ENCODE measurements at regions of chr12 and their contacts with region 1.

Region 1: DNA sequence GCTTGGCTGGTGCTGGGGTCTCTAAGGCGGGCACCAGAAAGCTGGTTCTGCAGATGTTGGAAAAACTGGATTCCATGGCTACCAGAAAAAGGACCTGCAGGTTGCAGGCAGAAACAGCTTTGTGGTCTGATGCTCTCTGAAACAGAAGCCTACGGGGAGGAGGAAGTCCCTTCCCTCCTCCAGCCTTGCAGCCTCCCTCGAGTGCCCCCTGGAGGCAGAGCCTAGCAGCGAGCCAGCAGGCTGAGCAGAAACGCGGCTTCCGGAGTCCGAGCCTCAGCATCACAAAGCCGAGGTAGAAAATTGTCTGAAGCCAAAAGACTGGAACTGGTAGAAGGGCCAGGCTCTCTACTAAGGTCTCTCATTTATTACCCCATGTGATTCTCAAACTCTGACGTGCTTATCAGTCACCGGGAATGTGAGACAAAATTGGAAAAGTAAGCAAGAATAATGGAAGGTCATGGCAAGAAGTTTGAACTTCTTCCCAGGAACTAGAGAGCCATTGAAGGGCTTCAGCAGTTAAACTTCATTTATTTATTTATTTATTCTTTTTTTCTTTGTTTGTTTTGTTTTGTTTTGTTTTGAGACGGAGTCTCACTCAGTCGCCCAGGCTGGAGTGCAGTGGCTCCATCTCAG is 82.2 kb upstream of the CPSF6 start:
- DNase-seq: peak; percentile 83
- ATAC-seq: peak; percentile 97
- H3K4me3 Mint-ChIP-seq: peak overlapping the region; percentile 17
- H3K27ac Mint-ChIP-seq: peak overlapping the region; percentile 24
- H3K4me1 Mint-ChIP-seq: peaks cover 14% of the 10 kb centered on the region
- H3K27me3 Mint-ChIP-seq: no peaks in the 10 kb centered on the region
- CTCF ChIP-seq: peak; percentile 85

Region 2: GRCh38 chr12:68831272-68831671 is 325.9 kb before region 1 on chr12:
- CTCF ChIA-PET with region 1: interaction called, 6 read pairs
- POLR2A ChIA-PET with region 1: no interaction called
- intact Hi-C with region 1: loop called (anchors 1 kb)
- DNase-seq: no peak
- ATAC-seq: no peak
- H3K4me3 Mint-ChIP-seq: no peak overlapping the region
- H3K27ac Mint-ChIP-seq: no peak overlapping the region
- H3K4me1 Mint-ChIP-seq: peaks cover 5% of the 10 kb centered on the region
- H3K27me3 Mint-ChIP-seq: no peaks in the 10 kb centered on the region
- CTCF ChIP-seq: no peak

Region 3: DNA sequence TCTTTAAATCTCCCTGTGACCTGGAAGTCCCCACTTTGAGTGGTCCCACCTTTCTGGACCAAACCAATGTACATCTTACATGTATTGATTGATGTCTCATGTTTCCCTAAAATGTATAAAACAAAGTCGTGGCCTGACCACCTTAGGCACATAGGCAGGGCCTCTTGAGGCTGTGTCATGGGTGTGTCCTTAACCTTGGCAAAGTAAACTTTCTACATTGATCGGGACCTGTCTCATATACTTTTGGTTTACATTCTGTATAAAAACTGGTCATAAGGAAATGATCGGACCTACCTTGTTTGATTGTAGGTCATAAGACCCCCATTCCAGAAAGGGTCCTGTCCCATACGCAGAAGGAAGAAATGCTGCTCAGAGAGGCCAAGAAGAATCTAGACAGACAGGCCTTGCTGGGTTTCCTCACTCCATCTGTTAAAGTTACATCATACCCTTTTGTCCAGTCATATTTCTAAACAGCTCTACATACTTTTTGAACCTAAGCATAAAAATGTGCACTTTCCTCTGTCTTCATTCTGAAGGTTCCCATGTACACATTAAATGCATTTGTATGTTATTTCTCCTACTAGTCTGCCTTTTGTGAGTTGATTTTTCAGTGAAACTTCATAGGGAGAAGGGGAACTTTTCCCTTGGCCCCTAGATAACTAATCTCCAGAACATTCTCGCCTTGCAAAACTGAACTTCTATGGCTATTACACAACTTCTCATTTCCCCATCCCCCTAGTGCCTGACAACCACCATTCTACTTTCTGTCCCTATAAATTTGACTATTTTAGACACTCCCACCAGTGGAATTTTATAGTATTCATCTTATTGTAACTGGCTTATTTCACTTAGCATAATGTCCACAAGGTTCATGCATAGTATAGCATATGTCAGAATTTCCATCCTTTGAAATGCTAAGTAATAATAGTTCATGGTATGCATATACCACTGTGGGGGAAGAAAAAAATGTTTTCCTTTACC is 194.0 kb before region 1 on chr12:
- CTCF ChIA-PET with region 1: no interaction called
- POLR2A ChIA-PET with region 1: no interaction called
- intact Hi-C with region 1: no loop called
- DNase-seq: no peak
- ATAC-seq: no peak
- H3K4me3 Mint-ChIP-seq: no peak overlapping the region
- H3K27ac Mint-ChIP-seq: no peak overlapping the region
- H3K4me1 Mint-ChIP-seq: peaks cover 18% of the 10 kb centered on the region
- H3K27me3 Mint-ChIP-seq: no peaks in the 10 kb centered on the region
- CTCF ChIP-seq: no peak

Region 4: GRCh38 chr12:69239352-69239921 is 82.3 kb after region 1 on chr12 and contains the start of gene CPSF6:
- CTCF ChIA-PET with region 1: interaction called, 10 read pairs
- POLR2A ChIA-PET with region 1: interaction called, 3 read pairs
- intact Hi-C with region 1: loop called (anchors 1 kb)
- DNase-seq: peak; percentile 96
- ATAC-seq: peak; percentile 93
- H3K4me3 Mint-ChIP-seq: peak within 1 kb of the TSS; percentile 99
- H3K27ac Mint-ChIP-seq: peak within 1 kb of the TSS; percentile 96
- H3K4me1 Mint-ChIP-seq: peaks cover 51% of the 10 kb centered on the region
- H3K27me3 Mint-ChIP-seq: no peaks in the 10 kb centered on the region
- CTCF ChIP-seq: no peak
- total RNA-seq, gene CPSF6: 95.5 and 104 TPM in 2 replicates

Region 5: DNA sequence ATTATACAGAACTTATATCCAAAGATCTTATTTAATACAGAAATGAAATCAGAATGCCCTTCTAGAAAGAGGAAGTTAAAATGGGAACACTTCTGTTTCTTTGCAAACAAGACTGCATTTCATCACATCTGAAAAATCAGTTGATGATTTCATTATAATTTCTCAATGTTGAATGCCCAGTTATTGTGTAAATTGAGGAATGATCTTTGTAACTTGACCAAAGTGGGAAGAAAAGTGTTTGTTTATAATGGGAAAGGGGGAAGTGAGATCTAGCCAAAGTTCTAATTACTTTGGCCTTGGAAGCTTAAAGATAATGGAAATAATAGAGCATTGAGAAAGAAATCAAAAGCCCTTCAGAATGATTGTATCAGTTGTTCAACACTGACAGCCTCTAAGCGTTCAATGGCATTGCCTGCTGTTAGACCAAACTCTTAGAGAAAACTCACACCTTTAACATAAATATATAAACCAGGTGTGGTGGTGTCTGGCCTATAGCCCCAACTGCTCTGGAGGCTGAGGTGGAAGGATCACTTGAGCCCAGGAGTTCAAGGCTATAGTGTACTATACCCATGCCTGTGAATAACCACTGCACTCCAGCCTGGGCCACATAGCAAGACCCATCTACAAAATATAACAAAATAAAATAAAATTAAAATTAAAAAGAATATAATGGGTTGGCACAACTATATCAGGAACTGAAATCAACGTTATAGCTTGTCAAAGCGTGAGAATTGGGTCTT is 181.2 kb after region 1 on chr12:
- CTCF ChIA-PET with region 1: no interaction called
- POLR2A ChIA-PET with region 1: no interaction called
- intact Hi-C with region 1: loop called (anchors 5 kb)
- DNase-seq: no peak
- ATAC-seq: peak; percentile 50
- H3K4me3 Mint-ChIP-seq: no peak overlapping the region
- H3K27ac Mint-ChIP-seq: peak overlapping the region; percentile 79
- H3K4me1 Mint-ChIP-seq: peaks cover 23% of the 10 kb centered on the region
- H3K27me3 Mint-ChIP-seq: peaks cover 2% of the 10 kb centered on the region
- CTCF ChIP-seq: no peak

Region 6: DNA sequence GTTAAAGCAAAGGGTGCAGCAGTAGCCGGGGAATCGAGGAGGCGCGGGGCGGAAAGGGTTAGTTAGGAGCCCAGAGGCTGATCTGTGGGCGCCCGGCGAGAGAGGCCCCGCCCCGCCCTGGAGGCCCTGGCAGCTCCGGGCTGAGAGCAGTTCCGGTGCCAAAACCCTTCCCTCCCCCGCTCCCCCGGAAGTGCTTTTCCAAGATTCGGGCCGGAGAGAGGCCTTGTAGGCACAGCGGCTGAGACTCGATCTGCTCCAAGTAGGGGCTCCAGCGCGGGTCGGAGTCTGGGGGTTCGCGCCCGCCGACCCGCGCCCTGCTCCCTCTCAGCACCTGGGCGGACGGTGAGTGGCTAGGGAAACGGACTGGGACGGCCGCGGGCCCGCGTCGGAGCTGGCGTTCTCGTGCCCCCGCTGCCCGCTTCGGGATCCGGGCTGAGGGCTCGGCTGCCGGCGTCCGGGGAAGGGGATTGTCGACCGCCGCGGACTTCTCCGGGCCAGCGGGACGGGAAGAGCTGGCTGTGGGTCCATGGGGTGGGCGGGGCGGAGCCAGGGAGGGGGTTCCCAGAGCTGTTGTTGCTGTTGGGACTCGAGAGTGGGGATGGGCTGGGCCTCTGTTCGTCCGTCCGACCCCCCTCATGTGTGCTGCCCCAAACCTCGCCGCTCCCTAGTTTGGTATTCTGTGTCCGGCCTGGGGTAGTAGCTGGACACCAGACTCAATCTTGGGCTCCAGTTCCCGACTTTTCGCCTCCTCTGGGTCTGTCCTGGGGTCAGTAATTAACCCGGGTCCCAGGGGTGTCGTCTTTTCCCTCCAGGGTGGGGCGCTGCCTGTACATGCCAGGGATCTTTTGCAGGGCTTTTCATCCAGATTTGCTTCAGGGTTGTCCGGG is 313.3 kb after region 1 on chr12 and contains the start of gene FRS2:
- CTCF ChIA-PET with region 1: no interaction called
- POLR2A ChIA-PET with region 1: no interaction called
- intact Hi-C with region 1: loop called (anchors 2 kb)
- DNase-seq: peak; percentile 77
- ATAC-seq: peak; percentile 98
- H3K4me3 Mint-ChIP-seq: peak within 1 kb of the TSS; percentile 99
- H3K27ac Mint-ChIP-seq: peak within 1 kb of the TSS; percentile 95
- H3K4me1 Mint-ChIP-seq: peaks cover 77% of the 10 kb centered on the region
- H3K27me3 Mint-ChIP-seq: no peaks in the 10 kb centered on the region
- CTCF ChIP-seq: no peak
- total RNA-seq, gene FRS2: 23.2 and 23.8 TPM in 2 replicates

Region 7: GRCh38 chr12:69585189-69586062 is 428.3 kb after region 1 on chr12 and contains the start of gene CCT2:
- CTCF ChIA-PET with region 1: interaction called, 7 read pairs
- POLR2A ChIA-PET with region 1: no interaction called
- intact Hi-C with region 1: loop called (anchors 1 kb)
- DNase-seq: peak; percentile 91
- ATAC-seq: peak; percentile 90
- H3K4me3 Mint-ChIP-seq: peak within 1 kb of the TSS; percentile 96
- H3K27ac Mint-ChIP-seq: peak within 1 kb of the TSS; percentile 95
- H3K4me1 Mint-ChIP-seq: peaks cover 8% of the 10 kb centered on the region
- H3K27me3 Mint-ChIP-seq: no peaks in the 10 kb centered on the region
- CTCF ChIP-seq: no peak
- total RNA-seq, gene CCT2: 205 and 211 TPM in 2 replicates

Region 8: DNA sequence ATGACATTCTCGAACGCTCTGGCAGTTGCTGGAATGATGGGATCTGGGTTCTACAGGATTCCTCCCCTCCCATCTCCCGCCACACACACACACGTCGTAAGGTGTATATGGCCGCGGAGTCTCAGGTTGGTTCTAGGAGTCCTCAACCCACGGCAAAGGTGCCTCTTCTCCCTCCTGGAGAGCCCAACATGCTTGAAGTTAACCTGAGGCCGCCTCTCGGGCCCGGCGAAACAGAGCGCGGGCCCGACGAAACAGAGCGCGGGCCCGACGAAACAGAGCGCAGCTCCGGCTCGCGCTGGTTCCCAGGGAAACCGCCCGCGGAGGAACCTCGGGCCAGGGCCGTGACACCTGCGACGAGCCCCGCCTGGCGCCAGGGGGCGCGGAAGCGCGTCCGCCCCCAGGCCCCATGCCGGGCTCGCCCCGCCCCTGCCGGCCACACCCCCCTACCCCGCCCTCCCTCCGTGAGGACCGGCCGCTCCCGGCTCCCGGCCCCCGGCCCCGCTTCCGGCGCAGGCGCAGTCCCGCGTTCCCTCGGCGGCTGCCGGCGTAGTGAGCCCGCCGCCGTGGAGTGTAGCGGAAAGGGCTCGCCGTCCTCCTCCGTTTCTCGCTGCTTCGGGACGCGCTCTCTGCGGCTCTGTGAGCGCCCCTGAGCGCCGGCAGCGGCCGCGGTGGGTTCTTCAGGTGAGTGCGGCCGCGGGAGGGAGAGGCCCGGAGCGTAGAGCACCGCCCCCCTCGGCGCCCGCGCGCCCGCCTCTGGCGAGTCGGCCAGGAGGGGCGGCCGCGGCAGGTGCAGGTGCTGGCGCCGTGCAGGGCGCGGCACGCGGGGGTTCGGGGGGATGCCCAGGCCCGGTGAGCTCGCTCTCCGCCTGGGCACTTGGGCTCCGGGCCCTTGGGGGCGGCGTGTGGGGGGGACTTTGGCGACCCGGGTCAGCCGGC is 581.5 kb after region 1 on chr12 and contains the start of gene RAB3IP:
- CTCF ChIA-PET with region 1: no interaction called
- POLR2A ChIA-PET with region 1: no interaction called
- intact Hi-C with region 1: loop called (anchors 5 kb)
- DNase-seq: peak; percentile 93
- ATAC-seq: peak; percentile 90
- H3K4me3 Mint-ChIP-seq: peak within 1 kb of the TSS; percentile 85
- H3K27ac Mint-ChIP-seq: peak within 1 kb of the TSS; percentile 73
- H3K4me1 Mint-ChIP-seq: peaks cover 19% of the 10 kb centered on the region
- H3K27me3 Mint-ChIP-seq: peaks cover 4% of the 10 kb centered on the region
- CTCF ChIP-seq: no peak
- total RNA-seq, gene RAB3IP: 34.6 and 37.9 TPM in 2 replicates